Heart left ventricle (tissue), 16 donors: ENCODE measurements at regions of chr1 and their contacts with region 1.

Region 1: GRCh38 chr1:29202584-29203340 is 21.1 kb upstream of the SRSF4 start:
- DNase-seq: peak; percentile 91 to 96 (median 93)
- ATAC-seq: peak; percentile 91 to 97 (median 94)
- H3K4me3 ChIP-seq: no peak overlapping the region
- H3K27ac ChIP-seq: peak overlapping the region; percentile 26 to 85 (median 72)
- H3K4me1 ChIP-seq: peaks cover 0 to 17% (median 9%) of the 10 kb centered on the region in 12 donors
- H3K27me3 ChIP-seq: no peaks in the 10 kb centered on the region
- CTCF ChIP-seq: peak; percentile 93 to 99 (median 98)
- POLR2A ChIP-seq: no peak

Region 2: DNA sequence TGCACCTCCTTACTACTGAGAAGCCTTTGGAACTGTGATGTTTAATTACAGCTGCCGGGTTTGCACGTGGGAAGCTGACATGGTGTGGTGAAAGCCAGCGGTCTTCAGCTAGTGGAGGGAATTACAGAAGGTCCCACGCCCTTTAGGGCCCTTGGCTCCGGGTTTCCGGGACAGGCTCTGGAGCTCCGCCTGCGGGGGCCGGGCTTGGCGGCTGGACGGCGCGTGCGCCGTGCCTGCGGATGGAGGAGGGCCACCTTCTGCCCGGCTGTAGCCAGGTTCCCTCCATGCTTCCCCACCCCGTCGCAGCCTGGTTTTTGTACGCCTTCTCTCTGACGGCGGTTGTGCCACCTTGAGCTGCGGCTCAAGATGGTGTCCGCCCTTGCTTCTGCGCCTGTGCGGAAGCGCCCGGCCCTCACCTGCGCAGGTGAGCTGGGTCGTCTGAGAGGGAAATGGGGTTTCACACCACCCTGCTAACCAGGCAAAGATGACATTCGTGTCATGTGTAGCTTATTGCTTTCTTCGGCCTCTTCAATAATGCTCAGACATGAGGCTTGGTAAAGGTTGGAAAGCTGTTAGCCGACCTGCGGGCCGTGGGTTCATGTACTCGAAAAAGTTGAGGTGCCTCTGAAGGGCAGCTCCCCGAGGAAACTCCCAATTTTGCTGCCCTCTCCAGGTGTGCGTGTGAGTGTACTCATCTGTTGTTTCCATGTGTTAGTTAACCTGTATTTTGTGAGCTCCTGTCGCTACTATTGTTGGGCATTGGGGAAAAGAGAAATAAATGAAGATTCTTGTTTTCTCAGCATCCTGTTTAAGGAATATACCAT is 427.4 kb before region 1 on chr1:
- intact Hi-C with region 1: loop called in 4 of 10 experiments (anchors 5 to 10 kb)
- DNase-seq: peak; percentile 79 to 89 (median 85)
- ATAC-seq: peak; percentile 72 to 97 (median 96)
- H3K4me3 ChIP-seq: peak overlapping the region in 11 of 12 donors; percentile 13 to 61 (median 49)
- H3K27ac ChIP-seq: peak overlapping the region in 5 of 12 donors; percentile 2 to 34 (median 21)
- H3K4me1 ChIP-seq: peaks cover 0 to 17% (median 6%) of the 10 kb centered on the region in 12 donors
- H3K27me3 ChIP-seq: no peaks in the 10 kb centered on the region
- CTCF ChIP-seq: peak in 2 of 12 donors; percentile 3 to 11
- POLR2A ChIP-seq: no peak

Region 3: GRCh38 chr1:28877132-28877781 is 325.5 kb before region 1 on chr1:
- intact Hi-C with region 1: loop called (anchors 1 to 2 kb)
- DNase-seq: peak; percentile 60 to 82 (median 69)
- ATAC-seq: peak; percentile 49 to 86 (median 84)
- H3K4me3 ChIP-seq: no peak overlapping the region
- H3K27ac ChIP-seq: no peak overlapping the region
- H3K4me1 ChIP-seq: peaks cover 0 to 2% (median 0%) of the 10 kb centered on the region in 12 donors
- H3K27me3 ChIP-seq: peaks cover 0 to 7% (median 0%) of the 10 kb centered on the region in 9 donors
- CTCF ChIP-seq: peak; percentile 83 to 95 (median 92)
- POLR2A ChIP-seq: no peak

Region 4: DNA sequence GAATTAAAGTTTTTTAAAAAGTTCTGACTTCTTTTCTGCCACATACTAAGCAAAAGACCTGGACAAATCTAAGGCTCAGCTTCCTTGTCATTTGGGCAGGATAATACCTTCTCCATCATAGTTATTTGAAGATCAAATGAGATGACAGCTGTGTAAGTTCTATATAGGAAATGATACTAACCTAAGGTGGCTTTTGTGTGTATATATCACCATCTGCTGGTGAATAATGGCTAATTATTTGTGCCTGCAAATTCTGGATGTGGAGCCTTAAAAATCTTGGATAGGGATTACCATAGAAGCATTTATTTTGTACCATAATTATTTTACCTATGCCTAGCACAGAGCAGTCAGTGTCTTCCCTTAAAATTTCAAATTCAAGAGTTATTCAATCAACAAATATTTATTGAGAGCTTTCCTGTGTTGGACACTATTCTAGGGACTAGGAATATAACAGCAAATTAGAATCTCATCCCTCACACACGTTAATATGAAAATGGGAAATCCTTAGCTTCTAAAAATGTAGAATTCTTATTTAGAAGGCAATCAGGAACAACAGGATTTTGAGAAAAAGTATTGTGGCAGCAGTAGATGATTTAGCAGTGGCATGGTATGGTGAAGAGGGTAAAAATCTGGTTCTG is 168.8 kb before region 1 on chr1:
- intact Hi-C with region 1: loop called in 9 of 10 experiments (anchors 2 to 10 kb)
- DNase-seq: no peak
- ATAC-seq: peak in 2 of 4 donors; percentile 46 to 55
- H3K4me3 ChIP-seq: no peak overlapping the region
- H3K27ac ChIP-seq: no peak overlapping the region
- H3K4me1 ChIP-seq: peaks cover 0 to 6% (median 0%) of the 10 kb centered on the region in 12 donors
- H3K27me3 ChIP-seq: no peaks in the 10 kb centered on the region
- CTCF ChIP-seq: peak; percentile 49 to 78 (median 66)
- POLR2A ChIP-seq: no peak

Region 5: GRCh38 chr1:29124366-29125236 is 78.2 kb before region 1 on chr1:
- intact Hi-C with region 1: loop called in 1 of 10 experiments (anchors 5 kb)
- DNase-seq: peak; percentile 82 to 90 (median 87)
- ATAC-seq: peak; percentile 58 to 81 (median 78)
- H3K4me3 ChIP-seq: peak overlapping the region; percentile 56 to 90 (median 77)
- H3K27ac ChIP-seq: peak overlapping the region; percentile 84 to 99 (median 94)
- H3K4me1 ChIP-seq: peaks cover 0 to 40% (median 18%) of the 10 kb centered on the region in 12 donors
- H3K27me3 ChIP-seq: peaks cover 0 to 57% (median 18%) of the 10 kb centered on the region in 9 donors
- CTCF ChIP-seq: peak; percentile 24 to 77 (median 70)
- POLR2A ChIP-seq: peak in 1 of 2 donors; percentile 42